OCI-LY7 (cell line): ENCODE measurements at regions of chr17 and their contacts with region 1.

Region 1: GRCh38 chr17:28902819-28903545 is at the start of gene DHRS13:
- DNase-seq: peak; percentile 97
- H3K4me3 ChIP-seq: peak within 1 kb of the TSS; percentile 77
- H3K27ac ChIP-seq: peak within 1 kb of the TSS; percentile 80
- H3K4me1 ChIP-seq: peaks cover 28% of the 10 kb centered on the region
- CTCF ChIP-seq: peak; percentile 97
- total RNA-seq, gene DHRS13: 27.1 and 28.4 TPM in 2 replicates

Region 2: DNA sequence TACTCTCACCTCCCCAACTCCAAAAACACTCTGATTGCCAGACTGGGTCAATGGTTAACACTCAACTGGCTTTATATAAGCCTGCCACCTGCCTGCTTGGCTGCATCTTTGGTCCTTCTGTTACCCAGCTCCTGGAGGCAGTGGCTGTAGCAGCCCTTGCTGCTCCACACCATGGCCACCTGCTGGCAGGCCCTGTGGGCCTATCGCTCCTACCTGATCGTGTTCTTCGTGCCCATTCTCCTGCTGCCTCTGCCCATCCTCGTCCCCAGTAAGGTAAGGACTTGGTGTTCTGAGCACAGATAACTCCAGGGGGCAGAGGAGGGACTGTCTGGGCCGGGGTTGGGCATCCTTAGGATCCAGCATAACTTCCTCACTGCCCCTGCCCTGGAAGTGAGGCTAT is 429.4 kb before region 1 on chr17 and contains the start of gene SLC13A2:
- CTCF ChIA-PET with region 1: no interaction called
- POLR2A ChIA-PET with region 1: no interaction called
- intact Hi-C with region 1: no loop called
- DNase-seq: no peak
- H3K4me3 ChIP-seq: no peak within 1 kb of the TSS
- H3K27ac ChIP-seq: no peak within 1 kb of the TSS
- H3K4me1 ChIP-seq: no peaks in the 10 kb centered on the region
- CTCF ChIP-seq: no peak
- total RNA-seq, gene SLC13A2: not detected in 2 replicates

Region 3: DNA sequence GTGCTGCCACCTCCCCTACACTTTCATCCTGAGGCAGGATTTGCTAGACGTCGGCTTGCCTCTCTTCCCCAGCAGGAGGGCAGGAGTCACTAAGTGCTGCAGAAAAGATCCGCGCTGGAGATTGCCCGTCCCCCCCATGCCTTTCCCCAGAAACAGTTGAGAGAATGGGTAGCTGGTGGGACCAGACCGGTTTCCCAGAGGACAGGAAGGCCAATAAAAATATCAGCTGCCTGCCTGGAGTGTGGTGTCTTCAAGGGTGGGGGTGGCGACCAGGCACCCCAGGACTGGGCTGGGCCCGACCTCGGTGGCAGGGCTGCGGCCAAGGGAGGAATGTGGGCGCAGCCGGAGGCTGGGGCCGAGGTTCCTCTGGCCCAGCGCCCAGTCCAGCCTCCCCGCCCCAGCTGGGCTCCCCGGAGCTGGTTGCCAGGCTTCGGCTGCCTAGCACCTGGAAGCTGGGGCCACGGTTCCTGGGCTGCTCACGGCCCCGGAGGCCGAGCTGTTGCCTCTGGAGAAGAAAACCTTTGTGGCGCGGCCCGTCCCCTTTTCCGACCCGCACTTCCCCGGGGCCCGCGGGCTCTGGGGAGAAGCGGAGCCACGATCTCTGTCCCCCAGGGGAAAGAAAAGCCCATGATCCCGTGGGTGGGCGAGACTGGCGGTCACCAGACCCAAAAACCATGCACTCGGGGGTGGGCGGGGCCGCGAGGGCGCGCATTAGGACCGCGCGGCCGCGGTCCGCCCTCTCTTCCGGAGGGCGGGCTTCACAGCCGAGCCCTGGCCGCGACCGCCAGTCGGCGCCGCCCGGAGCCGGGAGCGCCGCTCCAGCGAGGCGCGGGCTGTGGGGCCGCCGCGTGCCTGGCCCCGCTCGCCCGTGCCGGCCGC is 159.5 kb before region 1 on chr17 and contains the start of gene TRAF4:
- CTCF ChIA-PET with region 1: interaction called, 10 read pairs
- POLR2A ChIA-PET with region 1: no interaction called
- intact Hi-C with region 1: no loop called
- DNase-seq: peak; percentile 92
- H3K4me3 ChIP-seq: peak within 1 kb of the TSS; percentile 98
- H3K27ac ChIP-seq: peak within 1 kb of the TSS; percentile 95
- H3K4me1 ChIP-seq: peaks cover 73% of the 10 kb centered on the region
- CTCF ChIP-seq: no peak
- total RNA-seq, gene TRAF4: 73.6 and 105 TPM in 2 replicates

Region 4: DNA sequence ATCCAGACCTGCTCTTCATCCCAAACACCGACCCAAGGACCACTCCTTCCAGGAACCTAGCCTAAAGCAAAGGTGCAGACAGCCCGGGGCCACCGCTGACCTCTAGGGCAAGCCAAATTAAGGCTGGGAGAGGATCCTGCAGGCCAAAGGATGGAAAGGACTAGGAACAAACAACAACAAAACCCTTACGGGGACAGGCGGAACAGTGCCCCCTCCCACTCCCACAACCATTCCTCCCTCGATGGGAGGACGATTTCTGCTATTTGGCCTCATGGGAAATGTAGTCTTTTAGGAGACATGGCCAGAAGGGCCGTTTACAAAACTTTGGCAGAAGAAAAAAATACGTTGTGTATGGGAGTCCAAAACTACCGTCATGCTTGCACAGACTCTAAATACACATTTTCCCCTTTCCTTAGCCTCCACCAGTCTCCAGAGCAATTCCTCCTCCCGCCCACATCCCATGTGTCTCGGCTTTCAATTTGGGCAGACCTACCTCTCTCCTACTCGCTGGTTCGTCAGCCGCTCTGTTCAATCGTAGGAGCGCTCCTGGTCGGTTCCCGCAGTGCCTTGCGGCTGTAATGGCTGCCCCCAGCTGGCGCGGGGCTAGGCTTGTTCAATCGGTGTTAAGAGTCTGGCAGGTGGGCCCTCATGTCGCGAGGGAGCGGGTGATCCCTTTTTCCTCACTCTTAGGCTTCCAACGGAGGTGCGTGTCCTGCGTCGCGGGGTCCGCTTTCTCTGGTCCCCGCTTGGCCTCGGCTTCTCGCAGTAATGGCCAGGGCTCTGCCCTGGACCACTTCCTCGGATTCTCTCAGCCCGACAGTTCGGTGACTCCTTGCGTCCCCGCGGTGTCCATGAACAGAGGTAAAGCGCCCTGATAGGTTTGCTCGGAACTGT is 48.3 kb before region 1 on chr17 and contains the start of gene ERAL1:
- CTCF ChIA-PET with region 1: no interaction called
- POLR2A ChIA-PET with region 1: no interaction called
- intact Hi-C with region 1: loop called (anchors 2 kb)
- DNase-seq: peak; percentile 88
- H3K4me3 ChIP-seq: peak within 1 kb of the TSS; percentile 94
- H3K27ac ChIP-seq: peak within 1 kb of the TSS; percentile 39
- H3K4me1 ChIP-seq: peaks cover 15% of the 10 kb centered on the region
- CTCF ChIP-seq: peak; percentile 25; the same call in 1 of the 2 replicates
- total RNA-seq, gene ERAL1: 25.0 and 30.8 TPM in 2 replicates

Region 5: DNA sequence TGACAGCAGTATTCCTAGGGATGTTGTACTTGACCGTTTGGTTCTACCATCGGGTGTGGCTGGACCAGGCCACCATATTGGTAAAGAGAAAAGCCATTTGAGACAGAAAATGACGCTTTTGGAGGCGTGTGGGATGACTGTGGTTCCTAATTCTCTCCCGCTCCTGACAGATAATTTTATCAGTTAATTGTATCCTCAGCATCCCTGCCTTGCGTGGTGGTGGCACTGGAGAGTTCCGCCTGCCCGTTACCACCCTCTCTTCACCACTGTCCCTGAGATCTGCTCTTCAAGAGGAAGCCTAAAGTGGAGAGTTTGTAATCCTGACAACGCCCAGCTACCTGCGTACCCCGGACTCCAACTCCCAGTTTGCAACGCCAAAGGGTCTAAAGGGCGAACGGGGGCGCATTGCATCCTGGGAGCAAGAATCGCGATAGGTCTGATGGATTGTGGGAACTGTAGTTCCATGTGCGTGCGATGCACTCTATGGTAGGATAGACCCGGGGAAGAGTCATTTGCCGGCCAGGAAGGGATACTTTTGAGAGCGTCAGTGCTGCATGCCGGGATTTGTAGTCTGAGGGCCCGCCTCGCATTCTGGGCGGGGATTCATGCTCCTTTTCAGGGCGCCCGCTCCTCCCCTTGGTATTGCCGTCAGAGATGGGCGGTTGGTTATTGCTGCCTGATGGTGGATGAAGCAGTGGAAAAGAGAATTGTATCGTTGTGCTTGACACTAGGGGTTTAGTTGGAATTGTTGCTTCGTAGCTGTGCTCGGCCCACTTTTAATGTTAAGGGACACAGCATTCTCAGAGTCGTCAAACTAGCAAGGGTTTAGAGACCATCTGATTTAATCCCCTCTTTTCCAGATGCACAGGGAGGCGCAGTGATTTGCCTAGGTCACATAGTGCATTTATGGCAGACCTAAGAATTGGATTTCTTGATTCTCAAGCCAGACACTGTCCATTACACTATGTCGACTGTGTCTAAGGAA is 49.3 kb after region 1 on chr17:
- CTCF ChIA-PET with region 1: no interaction called
- POLR2A ChIA-PET with region 1: interaction called, 3 read pairs
- intact Hi-C with region 1: loop called (anchors 2 kb)
- DNase-seq: peak; percentile 99
- H3K4me3 ChIP-seq: peak overlapping the region; percentile 80
- H3K27ac ChIP-seq: peak overlapping the region; percentile 89
- H3K4me1 ChIP-seq: peaks cover 24% of the 10 kb centered on the region
- CTCF ChIP-seq: no peak